ENCODE measurements at regions of chr16 and their contacts with region 1.

Region 1: GRCh38 chr16:14501331-14502255 is 128.5 kb downstream of the PARN start:
- DNase-seq: peak; percentile 78 to 95
- ATAC-seq: peak; percentile 84 to 87
- H3K4me3 ChIP-seq: no peak overlapping the region
- H3K27ac ChIP-seq: peak overlapping the region; percentile 94 to 95
- H3K4me1 ChIP-seq: peaks cover 99% of the 10 kb centered on the region
- CTCF ChIP-seq: no peak
- EP300 ChIP-seq: peak; percentile 14 to 47; a peak in 1 of 5 replicates
- POLR2A ChIP-seq: no peak
- RAD21 ChIP-seq: no peak

Region 2: DNA sequence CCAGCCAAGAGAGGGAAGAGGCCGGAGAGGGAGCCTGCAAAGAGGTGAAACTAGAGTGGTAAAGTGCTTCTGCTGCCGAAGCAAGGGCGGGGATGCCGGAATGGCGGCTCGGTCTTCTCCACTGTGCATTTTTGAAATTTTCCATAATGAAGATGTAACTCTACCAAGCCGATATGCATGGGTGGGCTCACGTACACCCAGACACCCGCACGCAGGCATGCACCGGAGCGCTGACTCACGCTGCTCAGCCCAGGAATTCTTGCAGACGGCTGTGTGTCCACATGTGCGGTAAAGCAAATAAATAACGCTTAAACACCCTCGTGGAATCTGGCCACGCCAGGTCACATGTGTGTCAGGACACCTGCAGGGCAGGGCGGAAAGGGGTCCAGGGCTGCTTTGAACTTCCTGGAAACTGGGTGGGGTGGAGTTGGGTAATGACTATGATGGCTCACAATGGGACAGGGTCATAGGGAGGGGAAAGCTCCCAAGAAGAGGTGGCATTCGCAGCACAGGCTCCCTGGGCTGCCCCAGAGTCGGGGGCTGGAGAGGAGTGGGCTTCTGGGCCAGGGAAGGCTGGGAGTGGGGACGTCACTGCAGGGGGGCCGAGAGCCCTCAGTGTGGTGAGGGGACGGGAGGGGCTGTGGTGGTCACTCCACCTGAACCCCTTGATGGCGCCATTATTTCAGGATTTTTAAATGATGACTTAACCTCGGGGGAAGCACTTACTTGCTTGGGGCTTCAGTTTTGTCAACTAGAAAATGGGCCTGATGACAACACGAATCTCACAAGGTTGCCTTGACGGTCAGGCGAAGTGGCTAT is 137.0 kb before region 1 on chr16:
- CTCF ChIA-PET with region 1: interaction called, 4 read pairs
- POLR2A ChIA-PET with region 1: interaction called, 10 read pairs
- DNase-seq: peak; percentile 92 to 99
- ATAC-seq: peak; percentile 84 to 86
- H3K4me3 ChIP-seq: peak overlapping the region; percentile 13; the same call in 2 of the 3 replicates
- H3K27ac ChIP-seq: peak overlapping the region; percentile 98 to 99
- H3K4me1 ChIP-seq: peaks cover 38% of the 10 kb centered on the region
- CTCF ChIP-seq: peak; percentile 39; the same call in 2 of the 3 replicates
- EP300 ChIP-seq: peak; percentile 100
- POLR2A ChIP-seq: 0 out of 2 replicates have a peak, but pooled peaks have one; percentile 19
- RAD21 ChIP-seq: peak; percentile 42 to 73

Region 3: GRCh38 chr16:14486520-14487303 is 14.9 kb before region 1 on chr16:
- CTCF ChIA-PET with region 1: interaction called, 54 read pairs
- POLR2A ChIA-PET with region 1: interaction called, 6 read pairs
- DNase-seq: peak; percentile 93 to 94
- ATAC-seq: peak; percentile 89 to 92
- H3K4me3 ChIP-seq: peak overlapping the region; percentile 49
- H3K27ac ChIP-seq: peak overlapping the region; percentile 86 to 90
- H3K4me1 ChIP-seq: peaks cover 82% of the 10 kb centered on the region
- CTCF ChIP-seq: no peak
- EP300 ChIP-seq: peak in 1 of 2 experiments; percentile 46; a peak in 1 of 5 replicates
- POLR2A ChIP-seq: no peak
- RAD21 ChIP-seq: peak; percentile 20 to 40; a peak in 4 of 5 replicates